MCF 10A (cell line): ENCODE measurements at regions of chr20 and their contacts with region 1.

Region 1: DNA sequence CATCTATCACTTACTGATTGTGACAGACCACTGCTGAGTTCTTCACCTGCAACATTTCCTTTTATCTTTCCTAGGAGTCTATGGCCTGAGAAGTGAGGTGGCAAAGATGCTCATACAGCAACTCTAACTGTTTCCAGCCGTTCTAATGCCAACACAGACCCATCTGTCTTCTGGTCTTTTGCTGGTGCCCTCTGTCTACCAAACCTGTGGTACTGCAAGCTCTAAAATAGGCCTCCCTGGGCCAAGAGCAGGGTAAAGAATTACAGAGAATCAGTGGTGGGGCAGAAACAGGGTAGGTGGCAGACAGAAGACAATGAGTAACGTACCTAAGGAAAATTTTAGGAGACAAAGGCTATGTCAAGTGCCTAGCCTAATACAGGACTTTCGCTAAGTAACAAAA is 611.0 kb upstream of the FLRT3 start:
- DNase-seq: peak; percentile 14
- H3K4me3 Mint-ChIP-seq: no peak overlapping the region
- H3K27ac Mint-ChIP-seq: no peak overlapping the region
- H3K4me1 Mint-ChIP-seq: peaks cover 14% of the 10 kb centered on the region
- H3K27me3 Mint-ChIP-seq: no peaks in the 10 kb centered on the region
- CTCF ChIP-seq: peak; percentile 24

Region 2: GRCh38 chr20:14488756-14489479 is 459.5 kb before region 1 on chr20:
- CTCF ChIA-PET with region 1: no interaction called
- POLR2A ChIA-PET with region 1: no interaction called
- intact Hi-C with region 1: no loop called
- DNase-seq: no peak
- H3K4me3 Mint-ChIP-seq: no peak overlapping the region
- H3K27ac Mint-ChIP-seq: no peak overlapping the region
- H3K4me1 Mint-ChIP-seq: no peaks in the 10 kb centered on the region
- H3K27me3 Mint-ChIP-seq: no peaks in the 10 kb centered on the region
- CTCF ChIP-seq: no peak

Region 3: GRCh38 chr20:14935285-14935684 is 13.1 kb before region 1 on chr20:
- CTCF ChIA-PET with region 1: interaction called, 6 read pairs
- POLR2A ChIA-PET with region 1: interaction called, 11 read pairs
- intact Hi-C with region 1: no loop called
- DNase-seq: no peak
- H3K4me3 Mint-ChIP-seq: no peak overlapping the region
- H3K27ac Mint-ChIP-seq: no peak overlapping the region
- H3K4me1 Mint-ChIP-seq: no peaks in the 10 kb centered on the region
- H3K27me3 Mint-ChIP-seq: no peaks in the 10 kb centered on the region
- CTCF ChIP-seq: no peak

Region 4: GRCh38 chr20:14979453-14979986 is 31.1 kb after region 1 on chr20:
- CTCF ChIA-PET with region 1: no interaction called
- POLR2A ChIA-PET with region 1: no interaction called
- intact Hi-C with region 1: no loop called
- DNase-seq: no peak
- H3K4me3 Mint-ChIP-seq: no peak overlapping the region
- H3K27ac Mint-ChIP-seq: no peak overlapping the region
- H3K4me1 Mint-ChIP-seq: no peaks in the 10 kb centered on the region
- H3K27me3 Mint-ChIP-seq: no peaks in the 10 kb centered on the region
- CTCF ChIP-seq: no peak